Activated CD8-positive, alpha-beta memory T cell treated with anti-CD3 and anti-CD28 coated beads, Interleukin-2, amount 10 ng/mL, durations not matched to agents 7 days and 5 days (primary cell): ENCODE measurements at regions of chr5 and their contacts with region 1.

Region 1: GRCh38 chr5:73451224-73452130 is 2.9 kb upstream of the FOXD1 start:
- DNase-seq: peak; percentile 70
- ATAC-seq: peak; percentile 58
- H3K4me3 Mint-ChIP-seq: no peak overlapping the region
- H3K27ac Mint-ChIP-seq: no peak overlapping the region
- H3K4me1 Mint-ChIP-seq: peaks cover 18% of the 10 kb centered on the region
- H3K27me3 Mint-ChIP-seq: peaks cover 72% of the 10 kb centered on the region

Region 2: GRCh38 chr5:73215891-73216610 is 235.4 kb before region 1 on chr5:
- CTCF ChIA-PET with region 1: interaction called, 26 read pairs
- DNase-seq: peak; percentile 65
- ATAC-seq: peak; percentile 91
- H3K4me3 Mint-ChIP-seq: no peak overlapping the region
- H3K27ac Mint-ChIP-seq: no peak overlapping the region
- H3K4me1 Mint-ChIP-seq: peaks cover 6% of the 10 kb centered on the region
- H3K27me3 Mint-ChIP-seq: peaks cover 84% of the 10 kb centered on the region

Region 3: GRCh38 chr5:73338256-73339050 is 113.0 kb before region 1 on chr5:
- CTCF ChIA-PET with region 1: no interaction called
- DNase-seq: no peak
- ATAC-seq: no peak
- H3K4me3 Mint-ChIP-seq: no peak overlapping the region
- H3K27ac Mint-ChIP-seq: no peak overlapping the region
- H3K4me1 Mint-ChIP-seq: no peaks in the 10 kb centered on the region
- H3K27me3 Mint-ChIP-seq: peaks cover 63% of the 10 kb centered on the region

Region 4: DNA sequence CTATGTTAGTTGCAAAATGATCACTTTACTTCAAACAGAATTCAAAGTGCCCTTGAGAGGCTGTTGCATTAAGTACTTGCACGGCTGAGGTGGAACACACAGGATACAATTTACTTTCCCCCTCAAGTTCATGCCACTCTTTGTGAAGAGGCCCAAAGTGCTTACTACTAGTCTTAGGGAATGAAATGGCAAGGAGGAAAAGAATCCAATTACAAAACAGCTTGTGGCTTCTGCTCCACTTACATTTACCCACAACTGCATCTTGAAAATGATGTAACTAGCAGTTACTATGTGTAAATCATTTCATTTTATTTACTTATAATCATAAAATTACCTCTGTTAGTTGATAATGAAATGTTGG is 17.5 kb before region 1 on chr5:
- CTCF ChIA-PET with region 1: interaction called, 10 read pairs
- DNase-seq: no peak
- ATAC-seq: no peak
- H3K4me3 Mint-ChIP-seq: no peak overlapping the region
- H3K27ac Mint-ChIP-seq: no peak overlapping the region
- H3K4me1 Mint-ChIP-seq: peaks cover 4% of the 10 kb centered on the region
- H3K27me3 Mint-ChIP-seq: peaks cover 73% of the 10 kb centered on the region